WTC11 (cell line): ENCODE measurements at regions of chr19 and their contacts with region 1.

Region 1: GRCh38 chr19:51703575-51704515 is 10.7 kb downstream of the SPACA6 start:
- DNase-seq: peak; percentile 97
- ATAC-seq: peak; percentile 54
- H3K4me3 Mint-ChIP-seq: peak overlapping the region; percentile 94
- H3K27ac Mint-ChIP-seq: no peak overlapping the region; the same call in 1 of the 2 replicates
- H3K4me1 Mint-ChIP-seq: peaks cover 29% of the 10 kb centered on the region
- H3K27me3 Mint-ChIP-seq: peaks cover 8% of the 10 kb centered on the region
- CTCF ChIP-seq: no peak

Region 2: GRCh38 chr19:51242881-51243630 is 460.8 kb before region 1 on chr19:
- CTCF ChIA-PET with region 1: no interaction called
- POLR2A ChIA-PET with region 1: no interaction called
- DNase-seq: no peak
- ATAC-seq: no peak
- H3K4me3 Mint-ChIP-seq: no peak overlapping the region
- H3K27ac Mint-ChIP-seq: no peak overlapping the region
- H3K4me1 Mint-ChIP-seq: 0 out of 2 replicates have a peak, but pooled peaks cover 3% of the 10 kb centered on the region
- H3K27me3 Mint-ChIP-seq: peaks cover 16% of the 10 kb centered on the region
- CTCF ChIP-seq: no peak

Region 3: DNA sequence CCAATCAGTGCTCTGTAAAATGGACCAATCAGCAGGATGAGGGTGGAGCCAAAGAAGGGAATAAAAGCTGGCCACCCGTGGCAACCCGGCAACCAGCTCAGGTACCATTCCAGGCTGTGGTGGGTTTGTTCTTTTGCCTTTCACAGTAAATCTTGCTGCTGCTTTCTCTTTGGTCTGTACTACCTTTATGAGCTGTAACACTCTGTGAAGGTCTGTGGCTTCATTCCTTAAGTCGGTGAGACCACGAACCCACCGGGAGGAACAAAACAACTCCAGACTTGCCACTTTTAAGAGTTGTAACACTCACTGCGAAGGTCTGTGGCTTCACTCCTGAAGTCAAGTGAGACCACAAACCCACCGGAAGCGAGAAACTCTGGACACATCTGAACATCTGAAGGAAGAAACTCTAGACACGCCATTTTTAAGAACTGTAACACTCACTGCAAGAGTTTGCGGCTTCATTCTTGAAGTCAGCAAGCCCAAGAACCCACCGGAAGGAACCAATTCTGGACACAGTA is 27.2 kb before region 1 on chr19:
- CTCF ChIA-PET with region 1: interaction called, 10 read pairs
- POLR2A ChIA-PET with region 1: no interaction called
- DNase-seq: no peak
- ATAC-seq: no peak
- H3K4me3 Mint-ChIP-seq: no peak overlapping the region
- H3K27ac Mint-ChIP-seq: no peak overlapping the region
- H3K4me1 Mint-ChIP-seq: no peaks in the 10 kb centered on the region
- H3K27me3 Mint-ChIP-seq: peaks cover 26% of the 10 kb centered on the region
- CTCF ChIP-seq: no peak

Region 4: DNA sequence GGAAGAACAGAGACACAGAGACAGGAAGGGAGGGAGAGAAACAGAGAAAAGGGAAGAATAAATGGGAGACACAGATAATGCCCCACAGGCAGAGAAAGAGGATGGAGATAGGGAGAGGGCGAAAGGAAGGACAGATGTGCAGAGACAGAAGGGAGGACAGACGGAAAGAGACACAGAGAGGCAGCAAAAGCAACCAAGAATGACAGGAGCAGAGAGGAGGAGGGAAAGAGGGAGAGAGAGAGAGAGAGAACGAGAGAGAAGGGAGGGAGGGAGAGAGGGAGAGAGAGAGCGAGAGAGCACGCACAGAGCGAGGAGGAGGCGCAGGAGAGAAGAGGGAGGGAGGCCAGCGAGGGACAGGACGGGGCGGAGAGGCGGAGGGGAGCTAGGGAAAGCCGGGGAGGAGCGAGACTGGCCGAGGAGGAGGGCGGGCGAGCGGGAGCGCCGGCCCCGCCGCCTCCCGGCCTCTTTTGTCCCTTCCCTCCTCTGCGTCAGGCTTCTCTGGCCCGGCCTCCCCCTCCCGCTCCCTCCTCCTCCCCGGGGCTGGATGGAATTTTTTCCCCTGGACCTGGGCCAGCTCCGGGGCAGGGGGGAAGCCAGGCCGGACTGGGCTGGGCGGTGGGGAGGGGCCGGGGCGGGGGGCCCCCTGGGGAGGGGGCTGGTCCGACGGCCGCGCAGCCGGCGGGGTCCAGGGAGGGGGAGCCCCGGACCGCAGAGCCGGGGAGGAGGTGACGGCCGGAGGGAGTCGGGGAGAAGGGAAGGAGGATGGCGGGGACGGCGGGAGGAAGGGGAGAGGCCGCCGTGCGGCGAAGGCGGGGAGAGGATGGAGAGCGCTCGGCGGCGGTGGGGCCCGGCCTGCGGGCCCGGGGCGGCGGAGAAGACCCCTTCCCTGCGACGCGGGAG is 14.9 kb before region 1 on chr19:
- CTCF ChIA-PET with region 1: interaction called, 29 read pairs
- POLR2A ChIA-PET with region 1: interaction called, 17 read pairs
- DNase-seq: peak; percentile 81
- ATAC-seq: peak; percentile 25
- H3K4me3 Mint-ChIP-seq: peak overlapping the region; percentile 86
- H3K27ac Mint-ChIP-seq: peak overlapping the region; percentile 73
- H3K4me1 Mint-ChIP-seq: peaks cover 40% of the 10 kb centered on the region
- H3K27me3 Mint-ChIP-seq: peaks cover 8% of the 10 kb centered on the region; the same call in 1 of the 2 replicates
- CTCF ChIP-seq: no peak

Region 5: DNA sequence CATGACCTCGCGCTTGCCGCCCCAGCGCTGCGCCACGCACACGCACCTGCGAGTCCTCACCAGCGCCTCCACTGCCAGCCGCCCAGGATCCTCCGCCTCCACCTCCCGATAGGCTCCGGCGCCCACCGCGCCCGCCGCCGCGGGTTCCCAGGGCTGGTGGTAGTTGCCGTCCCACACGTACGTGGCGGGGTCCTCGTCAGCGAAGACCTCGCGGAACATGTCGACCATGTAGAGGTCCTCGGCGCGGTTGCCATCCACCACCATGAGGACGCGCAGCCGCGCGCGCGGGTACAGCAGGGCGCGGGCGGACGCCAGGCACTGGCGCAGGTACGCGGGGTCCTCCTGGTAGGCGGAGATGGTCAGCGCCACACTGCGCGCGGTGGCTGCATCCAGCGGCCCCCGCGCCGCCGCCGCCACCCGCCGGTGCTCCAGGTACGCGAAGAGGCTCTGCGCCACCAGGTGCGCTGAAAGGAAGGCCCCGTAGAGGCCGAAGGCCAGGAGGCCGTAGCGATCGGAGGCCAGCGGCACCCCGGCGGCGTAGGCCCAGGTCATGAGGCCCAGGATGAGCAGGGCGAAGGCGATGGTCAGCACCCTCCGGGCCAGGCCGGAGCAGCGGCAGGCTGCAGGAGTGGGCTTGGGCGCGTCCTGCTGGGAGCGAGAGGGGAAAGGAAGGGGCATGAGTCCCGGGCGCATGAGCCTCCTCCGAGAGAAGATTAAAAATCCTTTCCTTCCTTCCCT is 15.6 kb after region 1 on chr19:
- CTCF ChIA-PET with region 1: interaction called, 13 read pairs
- POLR2A ChIA-PET with region 1: no interaction called
- DNase-seq: peak; percentile 47
- ATAC-seq: peak; percentile 82
- H3K4me3 Mint-ChIP-seq: peak overlapping the region; percentile 61
- H3K27ac Mint-ChIP-seq: no peak overlapping the region
- H3K4me1 Mint-ChIP-seq: peaks cover 11% of the 10 kb centered on the region
- H3K27me3 Mint-ChIP-seq: peaks cover 61% of the 10 kb centered on the region
- CTCF ChIP-seq: no peak

Region 6: GRCh38 chr19:51754109-51754508 is 50.3 kb after region 1 on chr19:
- CTCF ChIA-PET with region 1: no interaction called
- POLR2A ChIA-PET with region 1: no interaction called
- DNase-seq: no peak
- ATAC-seq: no peak
- H3K4me3 Mint-ChIP-seq: no peak overlapping the region
- H3K27ac Mint-ChIP-seq: no peak overlapping the region
- H3K4me1 Mint-ChIP-seq: no peaks in the 10 kb centered on the region
- H3K27me3 Mint-ChIP-seq: peaks cover 8% of the 10 kb centered on the region
- CTCF ChIP-seq: no peak